Spleen (tissue), 13 donors: ENCODE measurements at regions of chr12 and their contacts with region 1.

Region 1: GRCh38 chr12:54201001-54201794 is 12.4 kb upstream of the SMUG1 start:
- DNase-seq: peak; percentile 88
- H3K4me3 ChIP-seq: no peak overlapping the region
- H3K27ac ChIP-seq: no peak overlapping the region
- H3K4me1 ChIP-seq: peaks cover 0 to 27% (median 6%) of the 10 kb centered on the region in 6 donors
- H3K27me3 ChIP-seq: peaks cover 0 to 99% (median 28%) of the 10 kb centered on the region in 7 donors
- CTCF ChIP-seq: peak; percentile 90 to 98 (median 96)
- POLR2A ChIP-seq: no peak

Region 2: GRCh38 chr12:53090563-53090962 is 1110.6 kb before region 1 on chr12:
- intact Hi-C with region 1: no loop called
- DNase-seq: no peak
- H3K4me3 ChIP-seq: no peak overlapping the region
- H3K27ac ChIP-seq: no peak overlapping the region
- H3K4me1 ChIP-seq: peaks cover 0 to 14% (median 3%) of the 10 kb centered on the region in 6 donors
- H3K27me3 ChIP-seq: no peaks in the 10 kb centered on the region
- CTCF ChIP-seq: no peak
- POLR2A ChIP-seq: no peak

Region 3: GRCh38 chr12:53999559-54000104 is 201.6 kb before region 1 on chr12:
- intact Hi-C with region 1: loop called (anchors 5 kb)
- DNase-seq: no peak
- H3K4me3 ChIP-seq: peak overlapping the region in 2 of 8 donors; percentile 25 to 53
- H3K27ac ChIP-seq: no peak overlapping the region
- H3K4me1 ChIP-seq: peaks cover 18 to 48% (median 39%) of the 10 kb centered on the region in 6 donors
- H3K27me3 ChIP-seq: peaks cover 18 to 100% (median 100%) of the 10 kb centered on the region in 7 donors
- CTCF ChIP-seq: no peak
- POLR2A ChIP-seq: no peak

Region 4: GRCh38 chr12:54452628-54453027 is 251.4 kb after region 1 on chr12:
- intact Hi-C with region 1: no loop called
- DNase-seq: no peak
- H3K4me3 ChIP-seq: no peak overlapping the region
- H3K27ac ChIP-seq: no peak overlapping the region
- H3K4me1 ChIP-seq: no peaks in the 10 kb centered on the region
- H3K27me3 ChIP-seq: no peaks in the 10 kb centered on the region
- CTCF ChIP-seq: no peak
- POLR2A ChIP-seq: no peak